Heart left ventricle (tissue), 16 donors: ENCODE measurements at regions of chr21 and their contacts with region 1.

Region 1: GRCh38 chr21:31580866-31581276 is 78.6 kb upstream of the SOD1 start:
- DNase-seq: peak; percentile 41 to 74 (median 53)
- ATAC-seq: peak in 3 of 4 donors; percentile 69 to 81 (median 76)
- H3K4me3 ChIP-seq: no peak overlapping the region
- H3K27ac ChIP-seq: no peak overlapping the region
- H3K4me1 ChIP-seq: peaks cover 0 to 5% (median 0%) of the 10 kb centered on the region in 12 donors
- H3K27me3 ChIP-seq: no peaks in the 10 kb centered on the region
- CTCF ChIP-seq: peak; percentile 68 to 90 (median 76)
- POLR2A ChIP-seq: no peak

Region 2: DNA sequence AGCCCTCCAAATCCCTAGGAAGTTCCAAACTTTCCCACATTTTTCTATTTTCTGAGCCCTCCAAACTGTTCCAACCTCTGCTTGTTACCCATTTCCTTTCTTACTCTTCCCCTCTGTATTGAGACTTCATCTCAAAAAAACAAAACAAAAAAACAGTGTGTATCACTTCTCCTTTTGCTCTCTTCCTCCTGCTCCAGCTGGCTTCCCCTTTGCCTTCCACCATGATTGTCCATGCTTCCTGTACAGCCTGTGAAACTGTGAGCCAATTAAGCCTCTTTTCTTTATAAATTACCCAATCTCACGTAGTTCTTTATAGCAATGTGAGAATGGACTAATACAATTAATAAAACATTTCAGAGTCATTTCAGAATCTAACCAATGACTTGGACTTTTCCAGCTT is 473.0 kb before region 1 on chr21:
- intact Hi-C with region 1: loop called in 2 of 10 experiments (anchors 5 to 10 kb)
- DNase-seq: no peak
- ATAC-seq: peak in 1 of 4 donors; percentile 39
- H3K4me3 ChIP-seq: no peak overlapping the region
- H3K27ac ChIP-seq: peak overlapping the region in 1 of 12 donors; percentile 72
- H3K4me1 ChIP-seq: peaks cover 0 to 34% (median 0%) of the 10 kb centered on the region in 12 donors
- H3K27me3 ChIP-seq: peaks cover 0 to 3% (median 0%) of the 10 kb centered on the region in 9 donors
- CTCF ChIP-seq: no peak
- POLR2A ChIP-seq: no peak

Region 3: GRCh38 chr21:31198575-31198974 is 382.3 kb before region 1 on chr21:
- intact Hi-C with region 1: loop called in 9 of 10 experiments (anchors 1 to 5 kb)
- DNase-seq: no peak
- ATAC-seq: peak in 3 of 4 donors; percentile 23 to 68 (median 27)
- H3K4me3 ChIP-seq: no peak overlapping the region
- H3K27ac ChIP-seq: no peak overlapping the region
- H3K4me1 ChIP-seq: peaks cover 0 to 22% (median 2%) of the 10 kb centered on the region in 12 donors
- H3K27me3 ChIP-seq: no peaks in the 10 kb centered on the region
- CTCF ChIP-seq: peak; percentile 51 to 77 (median 64)
- POLR2A ChIP-seq: no peak

Region 4: DNA sequence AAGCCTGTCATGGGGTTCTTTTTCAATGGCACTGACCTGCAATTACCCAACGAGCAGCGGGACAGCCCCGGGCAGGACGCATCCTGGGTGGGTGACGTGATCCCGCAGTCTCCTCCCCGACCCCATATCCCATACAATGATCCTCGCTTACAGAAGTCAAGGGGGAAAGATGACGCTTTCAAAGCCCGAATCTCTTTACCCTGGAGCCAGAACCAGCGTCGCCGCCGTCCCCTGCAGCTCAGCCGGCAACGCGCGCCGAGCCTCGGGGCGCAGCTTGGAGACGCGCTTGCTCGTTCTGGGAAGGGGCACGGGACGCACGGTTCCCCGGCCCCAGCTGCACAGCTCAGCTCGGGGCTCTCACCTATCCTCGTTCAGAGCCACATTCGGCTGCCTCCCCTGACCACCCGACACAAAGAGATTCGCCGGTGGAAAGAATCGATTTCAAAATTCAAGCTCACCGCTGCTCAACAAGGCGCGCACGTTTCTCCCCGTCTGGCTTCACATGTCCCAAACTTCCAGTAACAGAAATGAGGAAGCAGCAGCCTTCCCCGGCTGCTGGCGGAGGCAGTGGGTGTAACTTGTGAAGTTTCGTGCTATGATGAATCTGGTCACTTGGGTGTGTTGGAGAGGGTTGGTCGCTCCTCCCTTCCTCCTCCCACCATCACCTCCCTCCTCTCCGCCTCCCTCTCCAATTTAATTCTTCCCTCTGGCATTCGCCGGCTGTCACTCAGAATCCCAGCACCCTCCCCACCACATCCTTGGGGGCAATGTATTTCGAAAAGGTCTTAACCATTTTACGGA is 237.0 kb before region 1 on chr21 and contains the start of gene TIAM1:
- intact Hi-C with region 1: loop called in 1 of 10 experiments (anchors 10 kb)
- DNase-seq: peak; percentile 46 to 75 (median 57)
- ATAC-seq: peak; percentile 63 to 97 (median 92)
- H3K4me3 ChIP-seq: peak within 1 kb of the TSS; percentile 20 to 64 (median 50)
- H3K27ac ChIP-seq: peak within 1 kb of the TSS in 4 of 12 donors; percentile 21 to 67 (median 50)
- H3K4me1 ChIP-seq: peaks cover 0 to 29% (median 0%) of the 10 kb centered on the region in 12 donors
- H3K27me3 ChIP-seq: peaks cover 0 to 51% (median 20%) of the 10 kb centered on the region in 9 donors
- CTCF ChIP-seq: no peak
- POLR2A ChIP-seq: no peak
- total RNA-seq, gene TIAM1: 0.31 to 9.4 (median 1.7) TPM

Region 5: DNA sequence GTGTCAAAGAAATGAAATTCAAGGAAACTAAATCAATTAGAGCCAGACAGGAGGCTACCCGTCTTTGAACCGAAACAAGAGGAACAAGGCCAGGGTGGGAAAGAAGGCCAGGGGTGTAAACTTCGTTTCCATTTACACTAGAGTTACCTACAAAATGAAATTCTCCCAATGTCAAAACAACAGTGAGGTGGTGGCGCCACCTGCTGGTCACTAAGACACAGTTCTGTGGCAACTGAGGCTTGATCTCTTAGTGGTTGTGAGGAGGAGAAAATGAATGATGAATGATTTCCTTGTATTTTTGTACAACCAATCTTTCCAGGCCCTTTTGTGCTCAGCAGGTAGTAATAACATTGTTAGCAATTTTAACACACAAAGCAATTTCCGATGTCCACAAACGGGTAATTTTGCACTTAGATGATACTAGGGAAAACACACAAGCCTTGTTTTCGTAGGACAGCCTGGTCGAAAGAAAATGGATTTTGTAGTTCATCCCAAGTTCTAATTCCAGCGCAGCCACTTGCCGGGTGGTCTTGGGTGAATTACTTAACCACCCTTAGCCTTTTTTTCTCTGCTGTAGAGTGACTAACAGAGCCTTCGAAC is 23.8 kb after region 1 on chr21:
- intact Hi-C with region 1: no loop called
- DNase-seq: peak; percentile 35 to 79 (median 47)
- ATAC-seq: peak in 3 of 4 donors; percentile 54 to 59 (median 58)
- H3K4me3 ChIP-seq: no peak overlapping the region
- H3K27ac ChIP-seq: no peak overlapping the region
- H3K4me1 ChIP-seq: peaks cover 0 to 4% (median 0%) of the 10 kb centered on the region in 12 donors
- H3K27me3 ChIP-seq: no peaks in the 10 kb centered on the region
- CTCF ChIP-seq: peak; percentile 81 to 95 (median 88)
- POLR2A ChIP-seq: no peak